ENCODE measurements at regions of chr4 and their contacts with region 1.

Region 1: DNA sequence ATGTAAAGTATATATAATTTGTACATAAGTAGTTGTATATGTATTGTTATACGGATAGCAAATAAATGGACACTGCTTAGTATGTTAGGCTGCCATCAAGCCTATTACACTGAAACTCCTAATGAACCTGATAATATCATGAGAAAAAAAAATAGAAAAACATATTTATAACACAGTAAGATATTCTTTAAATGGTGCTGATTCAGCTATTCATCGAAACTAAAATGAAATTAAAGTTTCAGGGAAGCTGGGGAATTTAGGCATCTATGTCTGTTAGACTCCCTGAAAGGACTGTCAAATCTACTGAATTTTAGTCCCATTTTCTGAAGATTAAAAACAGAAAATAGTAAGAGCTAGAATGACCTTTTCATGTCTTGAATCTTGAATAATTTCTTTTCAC is 647.1 kb upstream of the PABPC4L start:
- DNase-seq: no peak
- ATAC-seq: no peak
- H3K4me3 ChIP-seq: no peak overlapping the region
- H3K4me3 Mint-ChIP-seq: no peak overlapping the region
- H3K27ac ChIP-seq: no peak overlapping the region
- H3K27ac Mint-ChIP-seq: no peak overlapping the region
- H3K4me1 ChIP-seq: no peaks in the 10 kb centered on the region
- H3K4me1 Mint-ChIP-seq: no peaks in the 10 kb centered on the region
- H3K27me3 ChIP-seq: no peaks in the 10 kb centered on the region
- H3K27me3 Mint-ChIP-seq: no peaks in the 10 kb centered on the region
- CTCF ChIP-seq: no peak

Region 2: GRCh38 chr4:134807231-134807745 is 41.4 kb before region 1 on chr4:
- CTCF ChIA-PET with region 1: no interaction called
- POLR2A ChIA-PET with region 1: no interaction called
- intact Hi-C with region 1: loop called (anchors 1 kb)
- DNase-seq: no peak
- ATAC-seq: no peak
- H3K4me3 ChIP-seq: no peak overlapping the region
- H3K4me3 Mint-ChIP-seq: no peak overlapping the region
- H3K27ac ChIP-seq: no peak overlapping the region
- H3K27ac Mint-ChIP-seq: no peak overlapping the region
- H3K4me1 ChIP-seq: no peaks in the 10 kb centered on the region
- H3K4me1 Mint-ChIP-seq: no peaks in the 10 kb centered on the region
- H3K27me3 ChIP-seq: no peaks in the 10 kb centered on the region
- H3K27me3 Mint-ChIP-seq: no peaks in the 10 kb centered on the region
- CTCF ChIP-seq: no peak